Naive thymus-derived CD4-positive, alpha-beta T cell (primary cell): ENCODE measurements at regions of chr20 and their contacts with region 1.

Region 1: GRCh38 chr20:21520702-21521595 is 7.1 kb upstream of the NKX2-2 start:
- DNase-seq: no peak
- ATAC-seq: no peak
- H3K4me3 ChIP-seq: no peak overlapping the region
- H3K4me3 Mint-ChIP-seq: peak overlapping the region in 9 of 10 donors; percentile 35 to 68 (median 51)
- H3K27ac ChIP-seq: no peak overlapping the region
- H3K27ac Mint-ChIP-seq: peak overlapping the region in 2 of 9 donors; percentile 43 to 77
- H3K4me1 ChIP-seq: peaks cover 0 to 19% of the 10 kb centered on the region in 2 donors
- H3K4me1 Mint-ChIP-seq: peaks cover 12 to 50% (median 42%) of the 10 kb centered on the region in 7 donors
- H3K27me3 ChIP-seq: peaks cover 0 to 51% of the 10 kb centered on the region in 2 donors
- H3K27me3 Mint-ChIP-seq: peaks cover 81 to 91% (median 83%) of the 10 kb centered on the region in 5 donors

Region 2: DNA sequence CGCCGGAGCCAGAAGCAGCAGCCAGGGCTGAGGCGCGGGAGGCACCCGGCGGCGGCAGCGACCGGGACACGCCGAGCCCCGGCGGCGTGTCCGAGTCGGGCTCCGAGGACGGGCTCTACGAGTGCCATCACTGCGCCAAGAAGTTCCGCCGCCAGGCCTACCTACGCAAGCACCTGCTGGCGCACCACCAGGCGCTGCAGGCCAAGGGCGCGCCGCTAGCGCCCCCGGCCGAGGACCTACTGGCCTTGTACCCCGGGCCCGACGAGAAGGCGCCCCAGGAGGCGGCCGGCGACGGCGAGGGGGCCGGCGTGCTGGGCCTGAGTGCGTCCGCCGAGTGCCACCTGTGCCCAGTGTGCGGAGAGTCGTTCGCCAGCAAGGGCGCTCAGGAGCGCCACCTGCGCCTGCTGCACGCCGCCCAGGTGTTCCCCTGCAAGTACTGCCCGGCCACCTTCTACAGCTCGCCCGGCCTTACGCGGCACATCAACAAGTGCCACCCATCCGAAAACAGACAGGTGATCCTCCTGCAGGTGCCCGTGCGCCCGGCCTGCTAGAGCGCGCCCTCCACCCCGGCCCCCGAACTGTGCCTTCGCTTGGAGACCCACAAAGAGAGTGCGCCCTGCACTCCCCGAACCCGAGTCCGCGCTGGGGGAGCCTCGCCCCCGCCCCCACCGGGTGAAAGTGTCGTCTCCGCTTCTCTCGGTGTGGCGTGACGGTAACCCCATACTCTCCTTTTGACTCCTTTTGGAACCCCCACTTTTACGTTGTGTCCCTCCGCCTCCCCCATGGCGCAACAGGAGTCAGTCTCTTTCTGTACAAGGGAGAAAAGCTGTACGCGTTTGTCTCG is 1151.5 kb before region 1 on chr20:
- CTCF ChIA-PET with region 1: no interaction called
- POLR2A ChIA-PET with region 1: no interaction called
- intact Hi-C with region 1: loop called in 1 of 2 experiments (anchors 5 kb)
- DNase-seq: peak in 1 of 9 donors; percentile 63
- ATAC-seq: no peak
- H3K4me3 ChIP-seq: no peak overlapping the region
- H3K4me3 Mint-ChIP-seq: peak overlapping the region in 9 of 10 donors; percentile 11 to 82 (median 68)
- H3K27ac ChIP-seq: no peak overlapping the region
- H3K27ac Mint-ChIP-seq: peak overlapping the region in 1 of 9 donors; percentile 51
- H3K4me1 ChIP-seq: no peaks in the 10 kb centered on the region
- H3K4me1 Mint-ChIP-seq: peaks cover 8 to 18% (median 13%) of the 10 kb centered on the region in 7 donors
- H3K27me3 ChIP-seq: peaks cover 0 to 5% of the 10 kb centered on the region in 2 donors
- H3K27me3 Mint-ChIP-seq: peaks cover 61 to 73% (median 67%) of the 10 kb centered on the region in 5 donors